ENCODE measurements at regions of chr10 and their contacts with region 1.

Region 1: DNA sequence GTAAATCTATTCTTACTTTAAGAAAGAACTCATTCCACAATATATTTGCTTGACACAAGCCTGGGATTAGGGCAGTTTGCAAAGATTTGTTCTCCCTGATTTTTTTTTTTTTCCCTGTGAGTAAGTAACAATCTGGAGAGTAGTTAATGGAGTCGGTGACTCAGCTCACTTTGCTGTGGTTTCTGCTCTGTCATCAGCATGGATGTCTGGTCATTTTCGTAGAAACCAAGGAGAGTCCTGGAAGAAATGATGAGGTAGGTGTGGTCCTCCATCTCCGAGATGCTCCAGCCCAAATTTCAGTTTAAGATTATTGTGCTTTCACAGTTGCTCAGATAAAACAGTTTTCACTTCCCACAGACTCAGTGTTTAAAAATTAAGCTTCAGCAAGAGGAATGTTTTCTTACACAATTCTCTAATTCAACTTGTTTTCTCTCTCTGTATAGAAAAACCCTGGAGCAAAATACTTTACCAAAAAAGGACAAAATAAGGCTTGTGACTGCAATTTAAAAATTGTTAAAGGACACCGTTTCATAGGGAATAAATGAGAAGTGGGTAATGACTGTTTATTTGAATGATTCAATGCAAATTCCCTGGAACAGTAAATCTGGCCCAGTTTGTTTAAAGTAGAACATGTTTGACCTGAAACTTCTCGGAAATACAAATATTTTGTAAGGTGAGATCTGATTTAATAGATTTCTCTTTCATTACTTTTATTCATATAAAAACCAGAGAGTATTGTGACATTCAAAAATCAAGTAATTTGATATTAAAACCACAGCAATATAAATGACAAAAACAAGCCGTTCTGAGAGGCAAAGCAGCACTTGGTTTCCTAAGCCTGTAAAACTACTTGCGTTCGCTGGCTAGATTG is 76.5 kb upstream of the PITRM1 start:
- DNase-seq: no peak
- ATAC-seq: peak in 3 of 4 donors; percentile 77 to 92 (median 79)
- H3K4me3 ChIP-seq: no peak overlapping the region
- H3K27ac ChIP-seq: peak overlapping the region in 7 of 12 donors; percentile 15 to 61 (median 48)
- H3K4me1 ChIP-seq: peaks cover 0 to 5% (median 0%) of the 10 kb centered on the region in 12 donors
- H3K27me3 ChIP-seq: no peaks in the 10 kb centered on the region
- CTCF ChIP-seq: no peak
- POLR2A ChIP-seq: no peak

Region 2: DNA sequence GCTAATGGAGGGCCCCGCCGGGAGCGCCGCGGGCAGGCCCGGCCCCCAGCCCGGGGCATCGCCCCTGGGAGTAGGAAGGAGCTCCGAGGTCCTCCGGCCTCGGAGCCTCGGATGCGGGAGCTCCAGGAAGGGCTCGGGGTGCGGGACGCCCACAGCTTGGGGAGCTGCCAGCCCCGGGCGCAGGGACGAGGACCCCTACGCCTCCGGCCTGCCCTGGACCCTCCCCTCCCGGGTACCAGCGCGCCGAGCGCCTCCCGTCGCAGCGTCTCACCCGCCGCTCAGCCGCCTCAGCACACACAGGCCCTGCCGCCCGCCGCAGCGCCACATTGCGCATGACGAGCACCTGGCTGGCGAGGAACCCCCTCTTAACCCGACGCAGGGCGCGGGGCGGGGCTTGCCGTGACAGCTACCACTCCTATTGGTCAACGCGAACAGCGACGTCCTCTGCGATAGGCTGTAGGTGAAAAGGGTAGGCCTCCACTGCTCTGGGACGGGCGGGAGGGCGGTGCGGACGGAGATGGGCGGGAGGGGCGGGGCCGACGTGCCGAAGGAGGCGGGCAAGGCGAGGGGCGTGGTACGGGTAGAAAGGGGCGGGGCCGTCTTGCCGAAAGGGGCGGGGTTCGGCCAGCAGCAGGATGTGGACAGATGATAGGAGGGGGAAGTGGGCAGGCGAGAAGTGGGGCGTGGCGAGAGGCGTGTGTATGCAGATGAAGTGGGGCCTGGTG is 76.5 kb before region 1 on chr10 and contains the start of gene PITRM1:
- intact Hi-C with region 1: no loop called
- DNase-seq: peak; percentile 98 to 99 (median 99)
- ATAC-seq: peak; percentile 98 to 99 (median 98)
- H3K4me3 ChIP-seq: peak within 1 kb of the TSS; percentile 39 to 98 (median 86)
- H3K27ac ChIP-seq: peak within 1 kb of the TSS; percentile 43 to 91 (median 86)
- H3K4me1 ChIP-seq: peaks cover 0 to 22% (median 9%) of the 10 kb centered on the region in 12 donors
- H3K27me3 ChIP-seq: no peaks in the 10 kb centered on the region
- CTCF ChIP-seq: no peak
- POLR2A ChIP-seq: peak; percentile 96 to 99
- total RNA-seq, gene PITRM1: 65.8 to 128 (median 93.0) TPM

Region 3: GRCh38 chr10:3435671-3436070 is 186.5 kb after region 1 on chr10:
- intact Hi-C with region 1: loop called in 1 of 10 experiments (anchors 10 kb)
- DNase-seq: no peak
- ATAC-seq: peak in 1 of 4 donors; percentile 49
- H3K4me3 ChIP-seq: no peak overlapping the region
- H3K27ac ChIP-seq: peak overlapping the region in 1 of 12 donors; percentile 32
- H3K4me1 ChIP-seq: peaks cover 0 to 5% (median 0%) of the 10 kb centered on the region in 12 donors
- H3K27me3 ChIP-seq: no peaks in the 10 kb centered on the region
- CTCF ChIP-seq: no peak
- POLR2A ChIP-seq: no peak

Measured in heart left ventricle (tissue), 16 donors.